Gastrocnemius medialis (tissue), 4 donors: ENCODE measurements at regions of chr17 and their contacts with region 1.

Region 1: GRCh38 chr17:54172096-54172984 is 349.6 kb downstream of the KIF2B start:
- DNase-seq: no peak
- ATAC-seq: no peak
- H3K4me3 ChIP-seq: no peak overlapping the region
- H3K27ac ChIP-seq: no peak overlapping the region
- H3K4me1 ChIP-seq: no peaks in the 10 kb centered on the region
- H3K27me3 ChIP-seq: no peaks in the 10 kb centered on the region
- CTCF ChIP-seq: peak; percentile 31 to 73 (median 59)
- POLR2A ChIP-seq: no peak

Region 2: GRCh38 chr17:53032861-53033271 is 1139.5 kb before region 1 on chr17:
- in situ Hi-C with region 1: loop called in 1 of 4 experiments (anchors 25 kb)
- intact Hi-C with region 1: loop called (anchors 10 kb)
- DNase-seq: peak in 1 of 2 donors; percentile 18
- ATAC-seq: no peak
- H3K4me3 ChIP-seq: no peak overlapping the region
- H3K27ac ChIP-seq: no peak overlapping the region
- H3K4me1 ChIP-seq: no peaks in the 10 kb centered on the region
- H3K27me3 ChIP-seq: no peaks in the 10 kb centered on the region
- CTCF ChIP-seq: peak in 4 of 5 experiments; percentile 38 to 58 (median 48)
- POLR2A ChIP-seq: no peak

Region 3: DNA sequence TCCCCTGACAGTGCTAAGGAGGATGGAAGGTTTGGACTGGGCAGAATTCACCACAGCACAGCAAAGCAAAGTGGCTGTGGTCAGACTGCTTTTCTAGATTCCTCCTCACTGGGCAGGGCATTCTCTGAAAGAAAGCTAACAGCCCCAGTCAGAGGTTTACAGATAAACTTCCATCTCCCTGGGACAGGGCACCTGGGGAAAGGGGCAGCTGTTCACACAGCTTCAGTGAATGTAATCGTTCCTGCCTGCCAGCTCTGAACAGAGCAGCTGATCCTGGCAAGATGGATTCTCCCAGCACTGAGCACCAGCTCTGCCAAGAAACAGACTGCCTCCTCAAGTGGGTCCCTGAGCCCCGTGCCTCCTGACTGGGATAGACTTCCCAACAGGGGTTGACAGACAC is 392.0 kb before region 1 on chr17:
- in situ Hi-C with region 1: loop called in 1 of 4 experiments (anchors 10 kb)
- intact Hi-C with region 1: no loop called
- DNase-seq: no peak
- ATAC-seq: no peak
- H3K4me3 ChIP-seq: no peak overlapping the region
- H3K27ac ChIP-seq: no peak overlapping the region
- H3K4me1 ChIP-seq: no peaks in the 10 kb centered on the region
- H3K27me3 ChIP-seq: no peaks in the 10 kb centered on the region
- CTCF ChIP-seq: no peak
- POLR2A ChIP-seq: no peak

Region 4: GRCh38 chr17:53792997-53793396 is 379.3 kb before region 1 on chr17:
- in situ Hi-C with region 1: loop called in 1 of 4 experiments (anchors 10 kb)
- intact Hi-C with region 1: loop called (anchors 2 kb)
- DNase-seq: peak; percentile 90 to 96
- ATAC-seq: peak; percentile 86 to 87
- H3K4me3 ChIP-seq: no peak overlapping the region
- H3K27ac ChIP-seq: peak overlapping the region; percentile 72 to 89 (median 88)
- H3K4me1 ChIP-seq: peaks cover 33 to 40% of the 10 kb centered on the region in 2 donors
- H3K27me3 ChIP-seq: no peaks in the 10 kb centered on the region
- CTCF ChIP-seq: no peak
- POLR2A ChIP-seq: no peak